A549 (cell line): ENCODE measurements at regions of chr9 and their contacts with region 1.

Region 1: DNA sequence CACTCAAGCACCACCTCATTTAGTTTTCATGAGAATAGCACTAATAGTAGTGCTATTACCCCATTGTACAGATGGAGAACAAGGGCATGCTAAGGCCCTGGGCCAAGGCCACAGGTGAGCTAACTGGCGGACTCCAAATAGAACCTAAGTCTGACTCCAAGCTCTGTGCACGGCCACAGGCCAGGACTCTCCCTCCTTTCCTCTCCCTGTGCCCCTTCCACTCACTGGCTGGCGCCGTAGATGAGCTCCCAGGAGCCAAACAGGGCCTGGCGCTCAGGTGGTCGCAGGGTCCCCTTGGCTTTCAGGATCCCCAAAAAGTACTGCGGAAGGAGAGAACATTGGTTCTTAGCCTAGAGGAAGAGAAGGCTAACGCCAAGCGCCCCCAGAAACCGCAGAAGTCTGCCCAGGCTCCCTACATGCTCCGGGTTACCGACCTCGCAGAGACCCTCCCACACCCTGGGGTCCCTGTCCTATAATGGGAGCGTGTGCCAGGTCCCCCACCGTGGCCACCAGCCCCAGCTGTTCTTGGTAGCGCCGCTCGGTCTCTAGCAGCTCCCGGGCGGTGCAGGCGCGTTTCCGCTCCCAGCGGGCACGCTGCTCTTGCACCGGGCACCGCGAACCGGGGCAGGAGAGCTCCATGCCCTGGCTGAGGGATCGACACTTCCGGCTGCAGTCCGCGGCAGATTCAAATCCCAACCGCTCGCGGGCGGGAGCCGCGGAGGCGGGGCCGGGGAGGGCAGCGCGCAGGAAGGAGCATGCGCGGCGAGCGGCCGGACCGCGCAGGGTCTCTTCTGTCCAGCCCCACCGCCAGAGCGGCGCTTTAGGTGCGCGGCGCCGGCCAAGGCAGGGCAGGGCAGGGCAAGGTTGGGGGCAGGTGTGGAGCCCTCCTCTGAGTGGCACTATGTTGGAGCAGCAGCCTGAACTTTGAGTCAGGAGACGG is at the start of gene ARHGEF39:
- DNase-seq: peak; percentile 86 to 94
- ATAC-seq: peak; percentile 87 to 88
- H3K4me3 ChIP-seq: peak within 1 kb of the TSS; percentile 71
- H3K27ac ChIP-seq: peak within 1 kb of the TSS; percentile 94 to 97
- H3K4me1 ChIP-seq: peaks cover 49% of the 10 kb centered on the region
- CTCF ChIP-seq: peak; percentile 47
- EP300 ChIP-seq: no peak
- POLR2A ChIP-seq: peak; percentile 65
- RAD21 ChIP-seq: peak; percentile 39 to 62; a peak in 4 of 5 replicates
- polyA plus RNA-seq, gene ARHGEF39: 17.6 and 21.4 TPM in 2 replicates

Region 2: DNA sequence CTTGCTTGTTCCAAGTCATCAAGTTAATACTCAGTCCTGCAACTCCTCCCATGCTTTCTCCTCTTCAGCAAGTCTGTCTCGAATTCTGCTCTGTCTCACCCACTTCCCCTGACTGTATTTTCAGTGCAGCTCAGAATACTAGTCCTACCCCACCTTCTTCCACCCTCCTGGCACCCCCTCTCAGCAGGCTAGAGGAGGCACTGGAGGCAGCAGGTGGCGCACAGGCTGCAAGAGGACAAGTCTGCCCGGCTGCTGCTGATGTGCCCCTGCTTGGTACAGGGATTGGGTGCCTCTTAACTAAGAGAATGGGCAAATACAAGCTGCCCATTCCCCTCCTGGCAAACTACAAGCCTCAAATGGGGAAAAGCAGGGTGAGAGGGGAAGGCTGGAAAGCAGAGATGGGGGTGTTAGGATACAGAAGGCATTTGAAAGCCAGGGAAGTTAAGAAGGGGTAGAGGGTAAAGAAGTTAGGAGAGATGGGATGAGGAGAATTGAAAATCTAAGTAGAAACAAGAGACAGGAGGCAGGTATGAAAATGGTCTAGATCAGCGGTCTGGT is 62.2 kb after region 1 on chr9:
- CTCF ChIA-PET with region 1: interaction called, 243 read pairs
- POLR2A ChIA-PET with region 1: interaction called, 17 read pairs
- DNase-seq: peak in 1 of 2 experiments; percentile 49
- ATAC-seq: peak in 1 of 2 experiments; percentile 59; a peak in 3 of 6 replicates
- H3K4me3 ChIP-seq: no peak overlapping the region
- H3K27ac ChIP-seq: peak overlapping the region; percentile 74 to 95
- H3K4me1 ChIP-seq: peaks cover 42% of the 10 kb centered on the region
- CTCF ChIP-seq: no peak
- EP300 ChIP-seq: no peak
- POLR2A ChIP-seq: no peak
- RAD21 ChIP-seq: no peak